Dorsolateral prefrontal cortex (tissue), 120 donors: ENCODE measurements at regions of chr16 and their contacts with region 1.

Region 1: GRCh38 chr16:57185944-57186871 is at the starts of genes PSME3IP1 and RSPRY1:
- DNase-seq: peak; percentile 94 to 100 (median 99)
- H3K4me3 ChIP-seq: peak within 1 kb of the TSS; percentile 62 to 100 (median 97)
- H3K27ac ChIP-seq: peak within 1 kb of the TSS; percentile 73 to 99 (median 95)
- H3K27me3 ChIP-seq: no peaks in the 10 kb centered on the region
- CTCF ChIP-seq: peak in 13 of 56 donors; percentile 1 to 44 (median 19)
- total RNA-seq, gene PSME3IP1: 100 to 178 (median 132) TPM
- total RNA-seq, gene RSPRY1: 21.4 to 53.0 (median 33.6) TPM

Region 2: DNA sequence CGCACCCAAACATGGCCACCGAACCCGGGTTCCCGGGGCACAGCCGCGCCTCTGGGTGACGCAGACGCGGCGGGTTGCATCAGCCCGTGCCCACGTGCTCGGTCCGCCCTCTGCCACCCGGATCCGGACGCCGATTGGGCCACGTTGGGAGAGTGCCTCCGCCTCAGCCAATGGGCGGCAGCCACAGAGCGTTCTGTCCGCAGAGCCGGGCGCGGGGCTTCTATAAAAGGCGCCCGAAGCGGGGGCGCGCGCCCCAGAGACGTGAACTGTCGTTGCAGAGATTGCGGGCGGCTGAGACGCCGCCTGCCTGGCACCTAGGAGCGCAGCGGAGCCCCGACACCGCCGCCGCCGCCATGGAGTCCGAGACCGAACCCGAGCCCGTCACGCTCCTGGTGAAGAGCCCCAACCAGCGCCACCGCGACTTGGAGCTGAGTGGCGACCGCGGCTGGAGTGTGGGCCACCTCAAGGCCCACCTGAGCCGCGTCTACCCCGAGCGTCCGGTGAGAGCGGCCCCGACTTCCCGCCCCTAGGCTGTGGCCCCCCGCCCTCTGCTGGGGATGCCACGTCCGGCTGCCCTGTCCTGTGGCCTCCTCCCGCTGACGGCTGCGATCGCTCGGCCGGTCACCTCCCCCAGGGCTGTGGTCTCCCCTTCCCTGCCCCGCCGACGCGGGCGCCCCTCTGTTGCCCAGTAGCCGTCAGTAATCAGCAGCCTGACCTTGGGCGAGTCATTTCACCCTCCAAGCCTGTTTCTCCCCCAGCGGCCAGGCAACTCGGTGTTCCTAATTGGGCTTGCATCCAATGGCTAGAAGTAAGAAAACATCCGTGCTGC is 254.1 kb before region 1 on chr16 and contains the start of gene HERPUD1:
- intact Hi-C with region 1: loop called in 1 of 2 experiments (anchors 5 kb)
- DNase-seq: peak; percentile 99 to 100 (median 100)
- H3K4me3 ChIP-seq: peak within 1 kb of the TSS; percentile 70 to 100 (median 98)
- H3K27ac ChIP-seq: peak within 1 kb of the TSS; percentile 90 to 100 (median 98)
- H3K27me3 ChIP-seq: no peaks in the 10 kb centered on the region
- CTCF ChIP-seq: peak in 36 of 56 donors; percentile 10 to 55 (median 35)
- total RNA-seq, gene HERPUD1: 76.8 to 213 (median 118) TPM

Region 3: GRCh38 chr16:57128771-57129389 is 57.3 kb before region 1 on chr16:
- intact Hi-C with region 1: no loop called
- DNase-seq: no peak
- H3K4me3 ChIP-seq: no peak overlapping the region
- H3K27ac ChIP-seq: peak overlapping the region in 55 of 59 donors; percentile 14 to 100 (median 91)
- H3K27me3 ChIP-seq: no peaks in the 10 kb centered on the region
- CTCF ChIP-seq: no peak

Region 4: DNA sequence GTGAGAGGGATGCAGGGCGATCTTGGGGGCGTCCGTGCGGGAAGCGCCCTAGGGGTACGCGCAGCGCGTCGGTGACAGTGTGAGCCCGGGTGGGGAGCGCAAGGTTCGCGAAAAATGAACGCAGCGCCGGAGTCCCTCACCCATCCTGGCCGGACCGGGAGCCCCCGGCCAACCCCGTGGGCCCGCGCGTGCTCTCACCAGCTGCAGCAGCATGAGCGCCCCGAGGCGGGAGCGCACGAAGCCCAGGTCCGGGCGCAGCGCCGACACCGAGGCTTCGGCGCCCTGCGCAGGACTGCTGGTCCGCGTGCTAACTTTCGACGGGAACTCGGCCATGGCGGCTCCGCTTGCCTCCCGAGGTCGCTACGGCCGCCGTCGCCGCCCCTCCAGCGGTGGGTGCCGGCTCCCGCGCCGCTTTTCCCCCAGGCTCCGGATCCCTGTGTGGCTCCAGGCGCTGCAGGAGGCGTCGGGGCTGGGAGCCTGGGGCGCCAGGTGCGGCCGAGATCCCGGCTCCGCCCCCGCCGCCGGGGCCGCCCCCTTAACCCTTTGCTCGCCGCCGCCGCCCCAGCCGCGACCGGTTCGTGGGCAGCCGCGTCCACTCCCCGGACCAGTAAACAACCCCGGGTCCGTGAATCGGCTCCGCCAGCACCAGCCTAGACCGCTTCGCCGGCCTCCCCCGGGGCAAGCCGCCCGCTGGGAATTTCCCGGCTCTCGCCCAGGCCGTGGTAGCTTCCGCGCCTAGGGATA is 98.2 kb after region 1 on chr16 and contains the start of gene PLLP:
- intact Hi-C with region 1: loop called in 1 of 2 experiments (anchors 5 kb)
- DNase-seq: peak in 7 of 10 donors; percentile 17 to 81 (median 60)
- H3K4me3 ChIP-seq: peak within 1 kb of the TSS; percentile 42 to 93 (median 75)
- H3K27ac ChIP-seq: peak within 1 kb of the TSS; percentile 58 to 99 (median 95)
- H3K27me3 ChIP-seq: peaks cover 0 to 17% (median 3%) of the 10 kb centered on the region in 45 donors
- CTCF ChIP-seq: peak in 12 of 56 donors; percentile 7 to 29 (median 14)
- total RNA-seq, gene PLLP: 20.8 to 459 (median 91.3) TPM

Region 5: DNA sequence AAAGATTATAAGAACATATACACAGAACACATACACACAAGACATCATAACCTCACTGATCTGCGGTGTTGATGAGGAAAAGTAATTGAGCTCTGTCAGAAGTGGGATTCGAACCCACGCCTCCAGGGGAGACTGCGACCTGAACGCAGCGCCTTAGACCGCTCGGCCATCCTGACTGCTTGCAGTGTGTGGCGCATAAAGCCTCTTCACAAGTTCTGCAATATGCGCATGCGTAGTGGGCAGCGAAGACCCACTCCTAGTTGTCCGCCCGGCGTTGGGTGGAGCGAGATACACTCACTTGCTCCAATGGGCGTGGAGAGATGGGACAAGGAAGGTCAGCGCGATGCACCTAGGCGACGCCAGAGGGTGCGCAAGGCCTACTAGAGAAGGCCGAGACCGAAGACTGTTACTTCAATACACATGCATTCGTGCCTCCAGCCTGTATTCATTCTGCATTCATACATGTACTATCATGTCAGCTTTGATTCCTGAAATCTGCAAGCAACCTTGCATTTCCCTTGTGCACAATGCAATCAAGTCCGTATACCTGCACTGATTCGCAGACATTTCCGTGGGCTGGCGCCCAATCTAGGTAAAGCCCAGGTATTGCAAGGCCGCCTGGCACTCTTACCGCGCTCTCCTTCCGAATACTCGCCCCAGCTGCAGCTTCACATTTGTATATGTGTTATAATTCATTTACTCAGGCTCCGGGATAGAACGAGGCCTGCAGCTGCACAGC is 114.3 kb after region 1 on chr16:
- intact Hi-C with region 1: loop called (anchors 5 to 10 kb)
- DNase-seq: peak; percentile 97 to 100 (median 99)
- H3K4me3 ChIP-seq: peak overlapping the region; percentile 29 to 73 (median 60)
- H3K27ac ChIP-seq: peak overlapping the region; percentile 81 to 99 (median 95)
- H3K27me3 ChIP-seq: no peaks in the 10 kb centered on the region
- CTCF ChIP-seq: peak; percentile 89 to 100 (median 98)

Region 6: GRCh38 chr16:57413301-57413730 is 227.1 kb after region 1 on chr16:
- intact Hi-C with region 1: loop called in 1 of 2 experiments (anchors 10 kb)
- DNase-seq: no peak
- H3K4me3 ChIP-seq: no peak overlapping the region
- H3K27ac ChIP-seq: no peak overlapping the region
- H3K27me3 ChIP-seq: no peaks in the 10 kb centered on the region
- CTCF ChIP-seq: no peak

Region 7: DNA sequence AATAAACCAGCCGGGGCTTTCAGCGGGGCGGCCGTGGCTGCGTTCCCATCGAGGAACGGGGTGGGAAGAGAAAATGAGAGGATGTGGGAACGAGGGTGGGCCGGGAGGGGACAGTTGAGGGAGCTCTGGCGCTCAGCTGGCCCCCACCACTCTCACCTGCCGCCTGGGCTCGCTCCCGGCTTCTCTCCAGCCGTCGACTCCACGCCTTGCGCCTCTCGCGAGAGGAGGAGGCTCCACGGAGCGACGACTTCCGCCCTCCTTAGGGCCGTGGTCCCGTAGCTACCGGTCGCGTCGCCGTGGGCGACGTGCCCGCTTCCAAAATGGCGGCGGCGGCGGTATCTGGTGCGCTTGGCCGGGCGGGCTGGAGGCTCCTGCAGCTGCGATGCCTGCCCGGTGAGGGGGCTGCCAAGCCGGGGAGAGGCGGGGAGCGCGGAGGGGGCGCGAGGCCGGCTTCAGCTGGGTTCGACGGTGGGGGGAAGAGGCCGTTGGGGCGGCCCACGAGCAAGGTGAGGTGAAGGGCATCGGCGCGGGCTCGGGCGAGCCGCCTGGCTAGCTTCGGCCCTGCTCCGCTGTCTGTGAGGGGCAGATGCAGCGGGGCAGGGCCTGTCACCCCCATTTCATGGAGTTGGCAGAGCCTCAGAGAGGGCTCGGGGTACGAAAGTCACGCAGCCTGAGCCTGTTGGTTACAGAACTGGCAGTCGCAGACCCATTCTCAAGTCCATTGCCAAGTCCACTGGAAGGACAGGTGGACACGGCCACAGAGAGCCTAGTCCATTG is 261.2 kb after region 1 on chr16 and contains the starts of genes CIAPIN1 and COQ9:
- intact Hi-C with region 1: loop called in 1 of 2 experiments (anchors 10 kb)
- DNase-seq: peak; percentile 75 to 94 (median 90)
- H3K4me3 ChIP-seq: peak within 1 kb of the TSS; percentile 75 to 100 (median 94)
- H3K27ac ChIP-seq: peak within 1 kb of the TSS; percentile 53 to 98 (median 92)
- H3K27me3 ChIP-seq: no peaks in the 10 kb centered on the region
- CTCF ChIP-seq: peak in 33 of 56 donors; percentile 11 to 59 (median 32)
- total RNA-seq, gene CIAPIN1: 30.2 to 91.1 (median 63.7) TPM
- total RNA-seq, gene COQ9: 49.2 to 112 (median 71.8) TPM

Region 8: DNA sequence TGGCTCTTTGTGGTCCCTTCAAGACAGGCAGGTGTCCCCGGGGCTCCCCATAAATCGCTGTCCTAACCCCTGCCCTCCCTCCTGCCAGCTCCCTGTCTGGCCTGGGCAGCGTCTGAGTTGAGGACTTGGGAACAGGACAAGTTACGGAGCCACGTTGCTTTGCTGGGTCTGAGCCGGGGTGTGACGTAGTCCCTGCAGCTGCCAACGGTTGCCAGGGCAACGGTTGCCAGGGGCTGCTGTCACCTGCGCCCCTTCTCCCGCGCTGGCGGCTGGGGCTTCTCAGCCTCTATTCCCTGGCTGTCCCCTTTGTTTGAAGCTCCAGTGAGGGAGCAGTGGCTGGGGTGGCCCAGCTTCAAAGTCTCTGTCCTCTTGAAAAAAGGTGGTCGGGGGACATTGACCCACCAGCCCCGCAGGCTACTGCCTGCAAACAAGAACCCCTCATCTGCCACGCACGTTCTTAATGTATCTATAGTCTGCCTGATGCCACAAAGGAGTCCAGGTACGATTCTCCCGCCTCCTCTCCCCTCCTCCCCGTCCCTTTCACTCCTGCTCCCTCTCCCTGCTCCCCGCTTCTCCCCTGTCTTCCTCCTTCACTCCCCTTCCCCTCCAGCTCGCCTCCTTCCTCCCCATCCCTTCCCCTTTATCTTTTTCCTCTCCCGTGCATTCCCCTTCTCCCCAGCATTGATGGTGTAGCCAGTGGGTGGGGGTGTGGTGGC is 453.1 kb after region 1 on chr16:
- intact Hi-C with region 1: no loop called
- DNase-seq: peak in 9 of 10 donors; percentile 73 to 89 (median 85)
- H3K4me3 ChIP-seq: peak overlapping the region in 53 of 59 donors; percentile 4 to 58 (median 36)
- H3K27ac ChIP-seq: peak overlapping the region; percentile 32 to 96 (median 90)
- H3K27me3 ChIP-seq: no peaks in the 10 kb centered on the region
- CTCF ChIP-seq: no peak